ENCODE measurements at regions of chr16 and their contacts with region 1.

Region 1: DNA sequence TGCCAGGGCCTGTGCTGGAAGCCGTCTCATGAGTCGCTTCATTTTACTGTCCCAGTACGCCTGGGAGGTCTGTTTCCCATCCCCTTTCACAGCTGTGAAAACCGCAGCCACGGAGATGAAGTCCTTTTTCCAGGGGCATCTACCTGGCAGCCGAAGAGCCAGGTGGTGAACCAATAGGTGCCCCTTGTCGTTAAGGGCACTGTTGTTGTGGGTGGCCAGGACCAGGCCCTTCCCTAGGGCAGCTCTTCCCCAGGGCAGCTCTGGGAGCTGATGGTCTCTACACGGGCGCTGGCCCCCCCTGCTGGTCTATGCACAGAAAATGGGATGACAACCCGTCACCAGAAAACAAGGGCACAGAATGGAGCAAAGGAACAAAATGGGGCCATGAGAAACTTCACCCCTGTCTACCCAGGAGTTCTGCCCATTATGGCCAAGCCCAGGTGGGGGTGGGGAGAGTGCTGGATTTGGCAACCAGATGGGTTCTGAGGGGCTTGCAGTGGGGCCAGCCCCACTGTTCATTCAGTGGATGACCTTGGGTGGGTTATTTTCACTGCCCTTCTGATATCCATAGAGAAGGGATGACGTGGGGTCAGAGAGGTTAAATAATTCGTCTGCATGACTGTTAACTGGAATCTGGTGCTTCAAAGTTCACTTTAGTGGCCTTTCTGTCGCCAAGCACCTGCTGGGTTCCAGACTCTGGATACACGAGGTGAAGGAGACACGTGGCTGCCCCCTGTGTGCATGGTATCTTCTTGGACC is 11.5 kb downstream of the RMI2 start:
- DNase-seq: peak; percentile 41 to 72
- ATAC-seq: no peak
- H3K4me3 ChIP-seq: no peak overlapping the region
- H3K4me3 Mint-ChIP-seq: no peak overlapping the region
- H3K27ac ChIP-seq: no peak overlapping the region
- H3K27ac Mint-ChIP-seq: no peak overlapping the region
- H3K4me1 ChIP-seq: peaks cover 40% of the 10 kb centered on the region
- H3K4me1 Mint-ChIP-seq: peaks cover 37 to 39% of the 10 kb centered on the region in 2 donors
- H3K27me3 ChIP-seq: peaks cover 60% of the 10 kb centered on the region
- H3K27me3 Mint-ChIP-seq: peaks cover 68 to 71% of the 10 kb centered on the region in 2 donors
- CTCF ChIP-seq: peak; percentile 45

Region 2: DNA sequence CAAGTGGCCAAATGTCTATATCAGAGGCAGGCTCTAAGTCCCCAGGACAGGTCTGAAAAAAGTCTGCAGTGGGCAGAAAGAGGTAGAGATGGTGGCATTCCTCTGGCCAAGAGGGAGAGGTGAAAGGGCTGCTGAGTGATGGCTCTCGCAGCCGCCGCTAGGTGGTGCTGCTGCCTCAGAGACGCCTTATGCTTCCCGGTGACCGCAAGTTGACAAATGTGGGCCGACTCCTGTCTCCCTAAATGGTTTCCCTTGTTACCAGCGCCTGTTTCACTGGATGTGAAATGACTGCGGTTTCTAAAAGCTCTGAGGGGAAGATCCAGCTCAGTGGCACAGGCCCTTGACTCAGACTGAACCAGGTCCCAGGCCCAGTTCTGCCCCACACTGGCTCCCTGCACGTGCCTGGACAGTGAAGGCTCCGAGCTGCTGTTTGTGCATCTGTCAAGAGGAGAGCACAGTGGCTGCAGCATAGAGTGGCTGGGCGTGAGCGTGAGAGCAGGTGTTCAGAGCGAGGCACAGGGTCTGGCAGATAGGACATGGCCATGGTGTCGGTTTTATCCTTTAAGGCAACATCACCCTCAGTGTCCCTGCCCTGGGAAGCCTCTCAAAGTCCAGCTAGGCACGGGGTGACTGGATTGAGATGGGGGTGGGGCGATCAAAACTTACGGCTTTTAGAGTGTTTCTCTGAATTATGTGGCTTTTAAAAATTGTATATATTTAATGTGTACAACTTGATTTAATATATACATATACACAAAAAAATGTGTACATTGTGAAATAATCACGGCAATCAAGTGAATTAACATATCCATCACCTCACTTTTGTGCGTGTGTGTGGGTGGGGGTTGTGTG is 392.5 kb before region 1 on chr16:
- intact Hi-C with region 1: loop called (anchors 2 kb)
- DNase-seq: peak; percentile 76 to 91
- ATAC-seq: peak; percentile 85 to 97 (median 94)
- H3K4me3 ChIP-seq: no peak overlapping the region
- H3K4me3 Mint-ChIP-seq: no peak overlapping the region
- H3K27ac ChIP-seq: no peak overlapping the region
- H3K27ac Mint-ChIP-seq: no peak overlapping the region
- H3K4me1 ChIP-seq: peaks cover 11% of the 10 kb centered on the region
- H3K4me1 Mint-ChIP-seq: peaks cover 8 to 12% of the 10 kb centered on the region in 2 donors
- H3K27me3 ChIP-seq: no peaks in the 10 kb centered on the region
- H3K27me3 Mint-ChIP-seq: no peaks in the 10 kb centered on the region
- CTCF ChIP-seq: peak; percentile 96

Region 3: GRCh38 chr16:10971560-10971961 is 385.2 kb before region 1 on chr16:
- intact Hi-C with region 1: loop called (anchors 2 kb)
- DNase-seq: peak in 1 of 2 donors; percentile 80
- ATAC-seq: peak; percentile 46 to 57 (median 53)
- H3K4me3 ChIP-seq: no peak overlapping the region
- H3K4me3 Mint-ChIP-seq: no peak overlapping the region
- H3K27ac ChIP-seq: no peak overlapping the region
- H3K27ac Mint-ChIP-seq: no peak overlapping the region
- H3K4me1 ChIP-seq: no peaks in the 10 kb centered on the region
- H3K4me1 Mint-ChIP-seq: no peaks in the 10 kb centered on the region
- H3K27me3 ChIP-seq: no peaks in the 10 kb centered on the region
- H3K27me3 Mint-ChIP-seq: no peaks in the 10 kb centered on the region
- CTCF ChIP-seq: peak; percentile 83

Region 4: DNA sequence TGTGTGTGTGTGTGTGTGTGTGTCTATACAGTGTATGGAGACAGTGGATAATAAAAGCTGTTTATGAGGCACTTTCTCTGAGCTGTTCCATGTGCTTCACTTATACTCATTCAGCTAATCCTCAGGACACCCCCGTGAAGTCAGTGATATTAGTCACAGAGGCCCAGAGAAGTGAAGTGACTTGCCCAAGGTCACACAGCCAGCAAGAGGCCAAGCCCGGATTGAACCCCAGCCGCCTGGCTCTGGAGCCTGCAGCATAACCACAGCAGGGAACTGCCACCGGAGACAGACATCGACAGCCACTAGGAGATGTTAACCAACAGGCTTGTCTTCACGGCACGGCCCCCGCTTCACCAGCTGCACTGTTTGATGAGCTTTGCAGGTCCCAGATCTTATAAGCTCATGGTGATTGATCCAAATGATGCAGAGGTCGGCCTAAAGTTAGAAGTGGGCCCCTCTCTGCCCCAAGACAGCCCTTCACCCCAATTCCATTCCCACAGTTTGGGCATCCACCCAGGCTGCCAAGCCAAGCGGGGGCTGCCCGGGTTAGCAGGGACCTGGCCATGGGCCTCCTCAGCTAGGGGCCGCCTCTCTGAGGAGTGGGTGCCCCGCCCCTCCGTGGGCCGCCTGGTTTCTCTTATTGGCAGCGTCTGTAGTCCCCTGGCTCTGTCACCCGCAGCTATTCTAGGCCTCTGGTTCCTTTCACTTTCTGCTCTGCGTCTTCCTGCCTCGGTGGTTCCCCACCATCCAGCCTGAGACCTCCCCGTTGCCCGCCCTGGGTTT is 131.7 kb before region 1 on chr16:
- intact Hi-C with region 1: loop called (anchors 5 kb)
- DNase-seq: peak; percentile 73 to 91
- ATAC-seq: peak; percentile 83 to 92 (median 89)
- H3K4me3 ChIP-seq: peak overlapping the region; percentile 19
- H3K4me3 Mint-ChIP-seq: peak overlapping the region; percentile 83
- H3K27ac ChIP-seq: peak overlapping the region; percentile 87
- H3K27ac Mint-ChIP-seq: peak overlapping the region; percentile 91
- H3K4me1 ChIP-seq: peaks cover 34% of the 10 kb centered on the region
- H3K4me1 Mint-ChIP-seq: peaks cover 19 to 35% of the 10 kb centered on the region in 2 donors
- H3K27me3 ChIP-seq: no peaks in the 10 kb centered on the region
- H3K27me3 Mint-ChIP-seq: no peaks in the 10 kb centered on the region
- CTCF ChIP-seq: no peak

Region 5: GRCh38 chr16:11297492-11298142 is 59.1 kb before region 1 on chr16:
- intact Hi-C with region 1: loop called (anchors 5 kb)
- DNase-seq: peak; percentile 63 to 79
- ATAC-seq: peak; percentile 86 to 98 (median 92)
- H3K4me3 ChIP-seq: no peak overlapping the region
- H3K4me3 Mint-ChIP-seq: peak overlapping the region; percentile 57
- H3K27ac ChIP-seq: no peak overlapping the region
- H3K27ac Mint-ChIP-seq: peak overlapping the region in 1 of 2 donors; percentile 18
- H3K4me1 ChIP-seq: peaks cover 28% of the 10 kb centered on the region
- H3K4me1 Mint-ChIP-seq: peaks cover 12 to 13% of the 10 kb centered on the region in 2 donors
- H3K27me3 ChIP-seq: peaks cover 21% of the 10 kb centered on the region
- H3K27me3 Mint-ChIP-seq: peaks cover 33 to 48% of the 10 kb centered on the region in 2 donors
- CTCF ChIP-seq: no peak

Measured in natural killer cell (primary cell).